ENCODE measurements at regions of chr7 and their contacts with region 1.

Region 1: GRCh38 chr7:104677587-104677986 is 336.4 kb upstream of the KMT2E start:
- DNase-seq: no peak
- H3K4me3 ChIP-seq: no peak overlapping the region
- H3K27ac ChIP-seq: no peak overlapping the region
- H3K4me1 ChIP-seq: no peaks in the 10 kb centered on the region
- CTCF ChIP-seq: no peak

Region 2: DNA sequence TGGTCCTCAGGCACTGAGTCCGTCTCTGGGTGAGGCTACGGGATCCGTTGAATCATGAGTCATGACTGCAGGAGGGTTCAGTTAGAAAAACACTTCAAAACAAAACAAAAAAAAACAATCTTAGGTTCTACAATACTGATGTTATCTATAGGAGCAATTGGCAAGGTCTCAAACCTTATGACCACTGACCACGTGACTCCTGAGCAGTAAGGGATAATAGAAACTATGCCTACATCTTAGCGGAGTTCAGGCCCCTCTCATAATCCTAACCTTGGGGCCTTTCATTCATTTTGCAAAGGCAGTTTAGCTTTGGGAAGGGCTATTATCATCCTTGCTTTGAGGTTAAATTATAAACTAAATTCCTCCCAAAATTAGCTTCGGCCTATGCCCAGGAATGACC is 70.7 kb before region 1 on chr7:
- CTCF ChIA-PET with region 1: no interaction called
- POLR2A ChIA-PET with region 1: no interaction called
- intact Hi-C with region 1: loop called (anchors 2 kb)
- DNase-seq: no peak
- H3K4me3 ChIP-seq: no peak overlapping the region
- H3K27ac ChIP-seq: no peak overlapping the region
- H3K4me1 ChIP-seq: no peaks in the 10 kb centered on the region
- CTCF ChIP-seq: no peak